ENCODE measurements at regions of chr20 and their contacts with region 1.

Region 1: GRCh38 chr20:543369-544152 is at the start of gene CSNK2A1:
- DNase-seq: peak; percentile 97
- H3K4me3 ChIP-seq: peak within 1 kb of the TSS; percentile 76 to 100 (median 93)
- H3K27ac ChIP-seq: peak within 1 kb of the TSS; percentile 89
- H3K4me1 ChIP-seq: peaks cover 28% of the 10 kb centered on the region
- H3K27me3 ChIP-seq: peaks cover 6 to 8% of the 10 kb centered on the region in 2 experiments
- CTCF ChIP-seq: no peak
- POLR2A ChIP-seq: peak; percentile 86
- total RNA-seq, gene CSNK2A1: 134 and 142 TPM in 2 replicates

Region 2: DNA sequence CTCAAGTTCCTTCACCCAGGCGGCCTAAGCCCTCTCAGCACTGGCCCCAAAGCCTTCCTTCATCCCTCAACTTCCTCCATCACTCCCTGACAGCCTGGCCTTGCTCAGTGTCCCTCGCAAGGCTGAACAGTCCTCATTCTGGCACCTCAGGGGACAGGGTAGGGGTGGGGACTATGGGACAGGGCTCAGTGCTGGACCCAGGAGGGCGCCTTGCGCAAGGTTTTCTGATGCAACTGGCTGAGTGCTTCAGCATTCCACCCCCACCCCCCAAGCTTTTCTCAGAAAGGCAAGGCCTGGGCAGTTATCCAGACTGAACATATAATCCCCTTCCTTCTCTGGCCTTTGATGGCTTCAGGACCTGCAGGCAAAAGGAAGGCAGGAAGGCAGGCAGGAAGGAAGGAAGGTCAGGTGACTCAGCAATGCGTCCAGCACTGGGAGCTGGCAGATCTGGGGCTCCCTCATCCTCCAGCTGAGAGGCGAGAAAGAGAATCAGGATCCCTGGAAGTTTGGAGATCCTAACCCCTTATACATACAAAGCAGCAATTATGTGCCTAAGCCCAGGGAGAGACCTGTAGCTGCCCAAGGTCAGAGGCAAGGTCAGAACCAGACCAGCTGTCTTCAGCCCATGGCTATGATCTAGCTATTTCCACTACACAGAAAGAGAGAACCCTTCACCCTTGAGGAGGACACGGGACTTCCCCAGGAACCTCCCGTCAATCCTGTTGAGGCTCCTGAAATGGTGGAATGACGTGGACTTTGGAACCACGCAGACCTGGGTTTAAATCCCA is 171.6 kb before region 1 on chr20:
- CTCF ChIA-PET with region 1: no interaction called
- POLR2A ChIA-PET with region 1: no interaction called
- dilution Hi-C with region 1: no loop called
- intact Hi-C with region 1: loop called (anchors 5 kb)
- DNase-seq: peak; percentile 93
- H3K4me3 ChIP-seq: no peak overlapping the region
- H3K27ac ChIP-seq: peak overlapping the region; percentile 82
- H3K4me1 ChIP-seq: peaks cover 52% of the 10 kb centered on the region
- H3K27me3 ChIP-seq: no peaks in the 10 kb centered on the region
- CTCF ChIP-seq: no peak
- POLR2A ChIP-seq: no peak

Region 3: DNA sequence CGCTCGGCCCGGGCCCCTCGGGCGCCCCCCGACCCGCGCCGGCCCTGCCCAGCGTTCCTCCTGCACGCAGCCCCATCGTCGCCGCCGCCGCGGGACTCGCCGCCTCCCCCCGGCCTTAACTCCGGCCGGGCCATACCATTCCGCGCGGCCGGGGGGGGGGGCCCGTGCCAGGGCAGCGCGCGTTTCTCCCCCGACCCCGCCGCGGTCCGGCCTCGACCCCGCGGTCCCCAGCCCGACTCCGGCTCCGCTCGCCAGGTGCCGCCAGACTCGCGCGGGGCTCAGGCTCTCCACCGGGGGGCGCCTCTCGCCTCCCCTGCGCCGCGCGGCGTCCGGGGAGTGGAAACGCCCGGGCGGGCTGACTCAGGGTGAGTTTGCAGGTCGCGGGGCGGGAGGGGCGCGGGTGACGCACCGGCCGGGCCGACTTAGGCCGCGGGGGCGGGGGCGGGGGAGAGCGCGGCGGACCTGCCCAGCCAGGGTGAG is 109.6 kb after region 1 on chr20 and contains the start of gene SRXN1:
- CTCF ChIA-PET with region 1: no interaction called
- POLR2A ChIA-PET with region 1: no interaction called
- dilution Hi-C with region 1: no loop called
- intact Hi-C with region 1: loop called (anchors 2 kb)
- DNase-seq: peak; percentile 87
- H3K4me3 ChIP-seq: peak within 1 kb of the TSS; percentile 71 to 77 (median 72)
- H3K27ac ChIP-seq: peak within 1 kb of the TSS; percentile 65
- H3K4me1 ChIP-seq: peaks cover 15% of the 10 kb centered on the region
- H3K27me3 ChIP-seq: peaks cover 11 to 12% of the 10 kb centered on the region in 2 experiments
- CTCF ChIP-seq: peak; percentile 55 to 65
- POLR2A ChIP-seq: peak; percentile 76
- total RNA-seq, gene SRXN1: 24.9 and 29.7 TPM in 2 replicates